ENCODE measurements at regions of chr15 and their contacts with region 1.

Region 1: DNA sequence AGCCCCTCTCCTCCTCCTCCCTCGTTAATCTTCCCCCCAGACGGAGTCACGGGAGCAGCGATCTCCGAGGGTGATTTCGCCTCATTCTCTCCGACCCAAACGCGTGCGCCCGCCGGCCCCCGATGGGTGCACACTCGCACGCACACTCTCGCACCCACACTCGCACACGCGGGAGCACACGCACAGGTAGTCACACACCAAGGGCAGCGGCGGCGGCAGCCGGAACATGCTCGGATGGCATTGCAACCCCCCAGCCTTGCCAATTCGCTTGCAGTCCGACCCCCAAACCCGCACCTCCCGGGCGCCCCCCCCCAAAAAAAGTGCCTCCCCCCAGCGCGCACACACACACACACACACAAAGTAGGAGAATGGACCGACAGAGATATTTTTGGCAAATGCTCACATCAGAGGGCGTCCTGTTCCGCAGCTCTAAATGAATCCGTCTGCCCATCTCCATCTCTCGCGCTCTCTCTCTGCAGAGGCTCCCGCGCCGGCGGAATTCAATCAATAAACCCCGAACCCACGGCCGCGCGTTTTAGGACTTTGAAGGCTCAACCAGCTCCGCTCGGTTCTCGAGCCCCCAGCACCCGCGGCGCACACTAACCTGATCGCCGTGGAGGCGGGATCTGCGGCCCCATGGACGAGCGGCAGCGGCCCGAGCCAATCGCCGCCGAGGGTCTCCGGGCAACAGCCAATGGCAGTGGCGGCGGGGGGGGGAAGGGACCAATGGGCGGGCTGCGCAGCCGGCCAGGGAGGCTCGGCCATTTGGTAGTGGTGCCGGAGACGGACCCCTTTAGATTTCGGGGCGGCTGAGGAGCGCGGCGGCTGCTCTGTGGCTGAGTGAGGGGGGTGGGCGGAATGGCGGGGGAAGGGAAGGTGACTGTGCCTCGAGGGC is at the start of gene ANP32A:
- DNase-seq: peak; percentile 90 to 99 (median 95)
- ATAC-seq: peak; percentile 85
- H3K4me3 ChIP-seq: peak within 1 kb of the TSS; percentile 99
- H3K4me3 Mint-ChIP-seq: peak within 1 kb of the TSS; percentile 85 to 100 (median 92)
- H3K27ac ChIP-seq: peak within 1 kb of the TSS; percentile 91
- H3K27ac Mint-ChIP-seq: peak within 1 kb of the TSS; percentile 84 to 100 (median 92)
- H3K4me1 ChIP-seq: peaks cover 19 to 23% of the 10 kb centered on the region in 2 donors
- H3K4me1 Mint-ChIP-seq: peaks cover 22 to 37% (median 34%) of the 10 kb centered on the region in 7 donors
- H3K27me3 ChIP-seq: no peaks in the 10 kb centered on the region
- H3K27me3 Mint-ChIP-seq: no peaks in the 10 kb centered on the region
- total RNA-seq, gene ANP32A: 86.1 to 229 (median 136) TPM

Region 2: DNA sequence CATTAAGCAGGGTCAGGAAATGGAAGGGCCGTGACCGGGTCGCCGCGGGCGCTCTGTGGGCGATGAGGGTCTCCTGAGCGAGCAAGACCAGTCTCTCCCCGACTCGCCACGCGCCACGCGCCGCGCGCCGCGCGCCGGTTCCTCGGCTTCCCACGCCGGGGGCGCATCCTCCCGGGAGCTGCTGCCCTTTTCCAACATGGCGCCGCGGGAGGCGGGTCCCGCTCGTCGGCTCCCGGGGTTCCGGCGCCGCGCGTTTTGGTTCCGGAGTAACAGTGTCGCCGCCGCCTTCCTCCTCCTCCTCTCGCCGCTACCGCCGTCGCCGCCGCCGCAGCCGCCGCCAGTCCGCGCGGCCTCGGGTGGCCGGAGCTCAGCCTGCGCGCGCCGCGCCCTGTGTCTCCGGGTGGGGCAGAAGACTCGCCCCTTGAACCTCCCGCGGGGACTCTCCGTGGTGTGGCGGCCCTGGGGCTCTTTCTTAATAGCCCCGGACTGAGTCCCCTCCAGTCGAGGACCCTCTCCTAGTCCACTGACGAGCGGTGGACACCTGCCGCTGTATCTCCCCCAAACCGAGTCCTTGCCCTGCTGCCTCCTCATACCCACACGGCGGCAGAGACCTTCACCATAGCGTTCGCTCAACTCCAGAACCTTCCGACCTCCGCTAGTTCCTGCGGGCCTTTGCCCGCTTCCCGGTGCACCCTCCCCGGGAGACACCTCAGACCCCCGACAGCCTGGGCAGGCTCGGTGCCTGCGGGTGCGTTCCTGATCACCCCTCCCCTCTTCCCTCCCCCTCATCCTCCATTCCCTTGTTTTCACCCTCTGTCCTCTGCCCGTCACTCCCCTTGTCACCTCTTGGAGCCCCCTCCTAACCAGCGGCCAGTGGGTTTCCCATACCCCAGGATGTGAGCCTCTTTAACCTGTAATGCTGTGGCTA is 1277.9 kb before region 1 on chr15 and contains the start of gene MAP2K5:
- CTCF ChIA-PET with region 1: no interaction called
- POLR2A ChIA-PET with region 1: no interaction called
- intact Hi-C with region 1: loop called in 1 of 2 experiments (anchors 5 kb)
- DNase-seq: peak; percentile 75 to 87 (median 78)
- ATAC-seq: peak; percentile 89
- H3K4me3 ChIP-seq: peak within 1 kb of the TSS; percentile 90
- H3K4me3 Mint-ChIP-seq: peak within 1 kb of the TSS; percentile 92 to 98 (median 98)
- H3K27ac ChIP-seq: peak within 1 kb of the TSS; percentile 78
- H3K27ac Mint-ChIP-seq: peak within 1 kb of the TSS; percentile 97 to 100 (median 99)
- H3K4me1 ChIP-seq: peaks cover 7 to 22% of the 10 kb centered on the region in 2 donors
- H3K4me1 Mint-ChIP-seq: peaks cover 20 to 68% (median 56%) of the 10 kb centered on the region in 7 donors
- H3K27me3 ChIP-seq: no peaks in the 10 kb centered on the region
- H3K27me3 Mint-ChIP-seq: no peaks in the 10 kb centered on the region
- total RNA-seq, gene MAP2K5: 23.4 to 43.4 (median 35.7) TPM

Region 3: GRCh38 chr15:68126396-68126795 is 694.1 kb before region 1 on chr15:
- CTCF ChIA-PET with region 1: no interaction called
- POLR2A ChIA-PET with region 1: no interaction called
- intact Hi-C with region 1: no loop called
- DNase-seq: no peak
- ATAC-seq: no peak
- H3K4me3 ChIP-seq: no peak overlapping the region
- H3K4me3 Mint-ChIP-seq: no peak overlapping the region
- H3K27ac ChIP-seq: no peak overlapping the region
- H3K27ac Mint-ChIP-seq: no peak overlapping the region
- H3K4me1 ChIP-seq: peaks cover 0 to 3% of the 10 kb centered on the region in 2 donors
- H3K4me1 Mint-ChIP-seq: peaks cover 16 to 48% (median 42%) of the 10 kb centered on the region in 7 donors
- H3K27me3 ChIP-seq: no peaks in the 10 kb centered on the region
- H3K27me3 Mint-ChIP-seq: no peaks in the 10 kb centered on the region

Region 4: GRCh38 chr15:68492855-68493254 is 327.7 kb before region 1 on chr15:
- CTCF ChIA-PET with region 1: no interaction called
- POLR2A ChIA-PET with region 1: no interaction called
- intact Hi-C with region 1: no loop called
- DNase-seq: no peak
- ATAC-seq: no peak
- H3K4me3 ChIP-seq: no peak overlapping the region
- H3K4me3 Mint-ChIP-seq: no peak overlapping the region
- H3K27ac ChIP-seq: no peak overlapping the region
- H3K27ac Mint-ChIP-seq: no peak overlapping the region
- H3K4me1 ChIP-seq: no peaks in the 10 kb centered on the region
- H3K4me1 Mint-ChIP-seq: no peaks in the 10 kb centered on the region
- H3K27me3 ChIP-seq: no peaks in the 10 kb centered on the region
- H3K27me3 Mint-ChIP-seq: peaks cover 25 to 51% (median 44%) of the 10 kb centered on the region in 5 donors

Region 5: GRCh38 chr15:68608206-68608843 is 212.2 kb before region 1 on chr15:
- CTCF ChIA-PET with region 1: no interaction called
- POLR2A ChIA-PET with region 1: no interaction called
- intact Hi-C with region 1: no loop called
- DNase-seq: no peak
- ATAC-seq: no peak
- H3K4me3 ChIP-seq: no peak overlapping the region
- H3K4me3 Mint-ChIP-seq: no peak overlapping the region
- H3K27ac ChIP-seq: no peak overlapping the region
- H3K27ac Mint-ChIP-seq: no peak overlapping the region
- H3K4me1 ChIP-seq: no peaks in the 10 kb centered on the region
- H3K4me1 Mint-ChIP-seq: no peaks in the 10 kb centered on the region
- H3K27me3 ChIP-seq: no peaks in the 10 kb centered on the region
- H3K27me3 Mint-ChIP-seq: peaks cover 0 to 11% (median 4%) of the 10 kb centered on the region in 5 donors

Region 6: GRCh38 chr15:68795298-68795848 is 25.2 kb before region 1 on chr15:
- CTCF ChIA-PET with region 1: no interaction called
- POLR2A ChIA-PET with region 1: interaction called, 47 read pairs
- intact Hi-C with region 1: loop called (anchors 1 kb)
- DNase-seq: peak; percentile 48 to 78 (median 67)
- ATAC-seq: peak; percentile 85
- H3K4me3 ChIP-seq: no peak overlapping the region
- H3K4me3 Mint-ChIP-seq: peak overlapping the region; percentile 46 to 79 (median 68)
- H3K27ac ChIP-seq: peak overlapping the region; percentile 50
- H3K27ac Mint-ChIP-seq: peak overlapping the region; percentile 44 to 91 (median 87)
- H3K4me1 ChIP-seq: peaks cover 63 to 72% of the 10 kb centered on the region in 2 donors
- H3K4me1 Mint-ChIP-seq: peaks cover 81 to 100% (median 96%) of the 10 kb centered on the region in 7 donors
- H3K27me3 ChIP-seq: no peaks in the 10 kb centered on the region
- H3K27me3 Mint-ChIP-seq: no peaks in the 10 kb centered on the region

Region 7: GRCh38 chr15:68806220-68807060 is 14.1 kb before region 1 on chr15:
- CTCF ChIA-PET with region 1: interaction called, 4 read pairs
- POLR2A ChIA-PET with region 1: interaction called, 10 read pairs
- intact Hi-C with region 1: no loop called
- DNase-seq: no peak
- ATAC-seq: no peak
- H3K4me3 ChIP-seq: no peak overlapping the region
- H3K4me3 Mint-ChIP-seq: peak overlapping the region in 4 of 10 donors; percentile 0 to 54 (median 13)
- H3K27ac ChIP-seq: no peak overlapping the region
- H3K27ac Mint-ChIP-seq: peak overlapping the region in 7 of 9 donors; percentile 1 to 73 (median 62)
- H3K4me1 ChIP-seq: peaks cover 31 to 50% of the 10 kb centered on the region in 2 donors
- H3K4me1 Mint-ChIP-seq: peaks cover 58 to 99% (median 88%) of the 10 kb centered on the region in 7 donors
- H3K27me3 ChIP-seq: no peaks in the 10 kb centered on the region
- H3K27me3 Mint-ChIP-seq: no peaks in the 10 kb centered on the region

Region 8: DNA sequence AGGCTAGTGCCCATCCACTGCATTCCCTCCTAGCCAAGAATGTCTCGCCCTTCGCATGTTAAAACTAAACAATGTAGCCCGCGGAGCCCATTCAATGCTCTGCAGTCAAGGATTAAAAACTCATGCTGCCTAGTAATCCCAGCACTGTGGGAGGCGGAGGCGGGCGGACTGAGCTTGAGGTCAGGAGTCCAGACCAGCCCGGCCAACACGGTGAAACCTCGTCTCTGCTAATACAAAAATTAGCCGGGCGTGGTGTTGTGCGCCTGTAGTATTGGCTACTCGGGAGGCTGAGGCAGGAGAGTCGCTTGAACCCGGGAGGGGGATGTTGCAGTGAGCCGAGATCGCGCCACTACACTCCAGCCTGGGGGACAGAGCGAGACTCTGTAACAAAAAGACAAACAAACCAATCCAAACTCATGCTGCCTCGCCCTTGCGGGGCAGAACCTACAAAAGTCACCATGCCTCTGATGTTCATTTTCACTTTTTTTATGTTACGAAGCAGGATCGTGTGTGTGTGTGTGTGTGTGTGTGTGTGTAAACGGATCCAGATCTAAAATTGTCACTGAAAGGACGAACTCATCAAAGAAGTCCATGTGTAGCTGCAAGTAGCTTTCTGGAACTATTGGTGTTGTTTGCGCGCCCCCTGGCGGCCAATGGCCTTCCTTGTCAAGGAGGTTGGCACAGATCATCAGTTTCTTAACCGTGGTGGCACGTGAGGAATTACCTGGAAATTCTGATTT is 55.0 kb after region 1 on chr15:
- CTCF ChIA-PET with region 1: interaction called, 4 read pairs
- POLR2A ChIA-PET with region 1: interaction called, 5 read pairs
- intact Hi-C with region 1: loop called (anchors 2 to 5 kb)
- DNase-seq: peak; percentile 81 to 92 (median 87)
- ATAC-seq: peak; percentile 83
- H3K4me3 ChIP-seq: no peak overlapping the region
- H3K4me3 Mint-ChIP-seq: peak overlapping the region; percentile 2 to 72 (median 58)
- H3K27ac ChIP-seq: no peak overlapping the region
- H3K27ac Mint-ChIP-seq: no peak overlapping the region
- H3K4me1 ChIP-seq: peaks cover 0 to 4% of the 10 kb centered on the region in 2 donors
- H3K4me1 Mint-ChIP-seq: peaks cover 0 to 7% (median 0%) of the 10 kb centered on the region in 7 donors
- H3K27me3 ChIP-seq: no peaks in the 10 kb centered on the region
- H3K27me3 Mint-ChIP-seq: peaks cover 5 to 53% (median 22%) of the 10 kb centered on the region in 5 donors

Region 9: GRCh38 chr15:69128667-69129321 is 308.3 kb after region 1 on chr15:
- CTCF ChIA-PET with region 1: no interaction called
- POLR2A ChIA-PET with region 1: no interaction called
- intact Hi-C with region 1: no loop called
- DNase-seq: no peak
- ATAC-seq: no peak
- H3K4me3 ChIP-seq: no peak overlapping the region
- H3K4me3 Mint-ChIP-seq: no peak overlapping the region
- H3K27ac ChIP-seq: no peak overlapping the region
- H3K27ac Mint-ChIP-seq: no peak overlapping the region
- H3K4me1 ChIP-seq: no peaks in the 10 kb centered on the region
- H3K4me1 Mint-ChIP-seq: peaks cover 0 to 9% (median 0%) of the 10 kb centered on the region in 7 donors
- H3K27me3 ChIP-seq: no peaks in the 10 kb centered on the region
- H3K27me3 Mint-ChIP-seq: peaks cover 0 to 4% (median 0%) of the 10 kb centered on the region in 5 donors

Region 10: GRCh38 chr15:69413822-69414700 is 593.5 kb after region 1 on chr15 and contains the start of gene KIF23:
- CTCF ChIA-PET with region 1: no interaction called
- POLR2A ChIA-PET with region 1: no interaction called
- intact Hi-C with region 1: loop called in 1 of 2 experiments (anchors 10 kb)
- DNase-seq: peak; percentile 84 to 93 (median 90)
- ATAC-seq: peak; percentile 98
- H3K4me3 ChIP-seq: peak within 1 kb of the TSS; percentile 66
- H3K4me3 Mint-ChIP-seq: peak within 1 kb of the TSS; percentile 81 to 88 (median 86)
- H3K27ac ChIP-seq: no peak within 1 kb of the TSS
- H3K27ac Mint-ChIP-seq: peak within 1 kb of the TSS in 7 of 9 donors; percentile 34 to 86 (median 78)
- H3K4me1 ChIP-seq: peaks cover 0 to 4% of the 10 kb centered on the region in 2 donors
- H3K4me1 Mint-ChIP-seq: peaks cover 0 to 36% (median 7%) of the 10 kb centered on the region in 7 donors
- H3K27me3 ChIP-seq: peaks cover 0 to 9% of the 10 kb centered on the region in 2 donors
- H3K27me3 Mint-ChIP-seq: peaks cover 8 to 22% (median 10%) of the 10 kb centered on the region in 5 donors
- total RNA-seq, gene KIF23: 0.30 to 39.4 (median 0.72) TPM in 4 of 5 experiments, not detected in the other

Region 11: GRCh38 chr15:69452692-69453521 is 632.4 kb after region 1 on chr15 and contains the start of gene RPLP1:
- CTCF ChIA-PET with region 1: no interaction called
- POLR2A ChIA-PET with region 1: no interaction called
- intact Hi-C with region 1: loop called (anchors 2 kb)
- DNase-seq: peak; percentile 93 to 97 (median 96)
- ATAC-seq: peak; percentile 93
- H3K4me3 ChIP-seq: peak within 1 kb of the TSS; percentile 82
- H3K4me3 Mint-ChIP-seq: peak within 1 kb of the TSS; percentile 91 to 100 (median 99)
- H3K27ac ChIP-seq: peak within 1 kb of the TSS; percentile 84
- H3K27ac Mint-ChIP-seq: peak within 1 kb of the TSS; percentile 96 to 100 (median 98)
- H3K4me1 ChIP-seq: peaks cover 14 to 33% of the 10 kb centered on the region in 2 donors
- H3K4me1 Mint-ChIP-seq: peaks cover 29 to 52% (median 42%) of the 10 kb centered on the region in 7 donors
- H3K27me3 ChIP-seq: no peaks in the 10 kb centered on the region
- H3K27me3 Mint-ChIP-seq: no peaks in the 10 kb centered on the region
- total RNA-seq, gene RPLP1: 1,719 to 2,941 (median 2,467) TPM